ENCODE measurements at regions of chr4 and their contacts with region 1.

Region 1: GRCh38 chr4:159446266-159446976 is 343.5 kb downstream of the RAPGEF2 start:
- DNase-seq: peak; percentile 46 to 48
- H3K4me3 ChIP-seq: no peak overlapping the region
- H3K4me3 Mint-ChIP-seq: no peak overlapping the region
- H3K27ac Mint-ChIP-seq: no peak overlapping the region
- H3K4me1 ChIP-seq: no peaks in the 10 kb centered on the region
- H3K4me1 Mint-ChIP-seq: no peaks in the 10 kb centered on the region
- H3K27me3 ChIP-seq: no peaks in the 10 kb centered on the region
- H3K27me3 Mint-ChIP-seq: no peaks in the 10 kb centered on the region
- CTCF ChIP-seq: peak; percentile 72 to 87

Region 2: DNA sequence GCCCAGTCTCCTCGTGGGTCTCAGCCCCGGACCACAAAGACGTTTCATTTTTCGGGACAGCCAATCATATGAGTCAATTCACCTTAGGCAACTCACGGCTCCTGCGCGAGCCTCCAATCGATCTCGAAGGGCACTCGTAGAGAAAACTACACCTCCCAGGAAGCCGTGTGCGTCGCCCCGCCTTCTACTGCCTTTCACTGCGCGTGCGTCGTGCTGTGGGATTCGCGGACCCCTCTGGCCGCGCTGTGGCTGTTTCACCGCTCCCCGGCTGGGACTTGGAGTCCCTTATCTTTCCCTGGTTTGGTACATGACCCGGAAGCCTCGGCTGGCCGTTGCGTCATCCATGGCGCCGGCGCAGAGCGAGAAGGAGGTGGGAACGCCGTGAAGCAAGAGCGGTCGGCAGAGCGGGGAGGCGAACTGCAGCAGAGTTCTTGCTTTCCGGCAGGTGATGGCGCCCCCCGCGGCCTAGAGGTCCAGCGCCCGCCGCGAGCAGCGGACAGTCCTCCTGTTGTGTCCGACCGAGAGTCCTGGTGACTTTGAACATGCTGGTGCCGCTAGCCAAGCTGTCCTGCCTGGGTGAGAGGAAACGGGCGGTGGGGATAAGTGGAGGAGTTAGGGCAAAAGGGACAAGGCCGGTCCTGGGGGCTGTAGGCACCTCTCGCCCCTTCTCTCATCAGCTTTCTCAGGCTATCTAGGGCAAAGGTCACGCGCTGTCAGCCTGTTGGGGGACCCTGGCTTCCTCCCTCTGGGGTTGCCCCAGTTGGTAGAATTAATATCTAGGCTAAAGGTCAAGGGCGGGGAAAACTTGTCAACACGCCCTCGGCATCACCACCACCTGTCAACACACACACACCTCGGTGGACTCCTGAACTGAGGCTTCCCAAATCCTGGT is 774.3 kb before region 1 on chr4 and contains the start of gene ETFDH:
- CTCF ChIA-PET with region 1: no interaction called
- POLR2A ChIA-PET with region 1: no interaction called
- intact Hi-C with region 1: loop called (anchors 5 kb)
- DNase-seq: peak; percentile 98 to 99
- H3K4me3 ChIP-seq: peak within 1 kb of the TSS; percentile 80
- H3K4me3 Mint-ChIP-seq: peak within 1 kb of the TSS; percentile 100
- H3K27ac Mint-ChIP-seq: peak within 1 kb of the TSS; percentile 98
- H3K4me1 ChIP-seq: peaks cover 3% of the 10 kb centered on the region; the same call in 1 of the 2 replicates
- H3K4me1 Mint-ChIP-seq: peaks cover 7% of the 10 kb centered on the region
- H3K27me3 ChIP-seq: no peaks in the 10 kb centered on the region
- H3K27me3 Mint-ChIP-seq: no peaks in the 10 kb centered on the region
- CTCF ChIP-seq: peak; percentile 41 to 70
- total RNA-seq, gene ETFDH: 5.8 and 6.4 TPM in 2 replicates

Region 3: GRCh38 chr4:158856852-158857251 is 589.6 kb before region 1 on chr4:
- CTCF ChIA-PET with region 1: no interaction called
- POLR2A ChIA-PET with region 1: no interaction called
- intact Hi-C with region 1: loop called (anchors 1 kb)
- DNase-seq: peak in 1 of 2 experiments; percentile 28
- H3K4me3 ChIP-seq: no peak overlapping the region
- H3K4me3 Mint-ChIP-seq: no peak overlapping the region
- H3K27ac Mint-ChIP-seq: no peak overlapping the region
- H3K4me1 ChIP-seq: peaks cover 39% of the 10 kb centered on the region
- H3K4me1 Mint-ChIP-seq: peaks cover 30% of the 10 kb centered on the region
- H3K27me3 ChIP-seq: no peaks in the 10 kb centered on the region
- H3K27me3 Mint-ChIP-seq: no peaks in the 10 kb centered on the region
- CTCF ChIP-seq: peak; percentile 32 to 39

Region 4: GRCh38 chr4:159227984-159228383 is 218.4 kb before region 1 on chr4:
- CTCF ChIA-PET with region 1: no interaction called
- POLR2A ChIA-PET with region 1: no interaction called
- intact Hi-C with region 1: loop called (anchors 5 kb)
- DNase-seq: peak; percentile 76 to 86
- H3K4me3 ChIP-seq: peak overlapping the region; percentile 8; the same call in 1 of the 2 replicates
- H3K4me3 Mint-ChIP-seq: peak overlapping the region; percentile 82
- H3K27ac Mint-ChIP-seq: peak overlapping the region; percentile 97
- H3K4me1 ChIP-seq: peaks cover 48% of the 10 kb centered on the region
- H3K4me1 Mint-ChIP-seq: peaks cover 28% of the 10 kb centered on the region
- H3K27me3 ChIP-seq: no peaks in the 10 kb centered on the region
- H3K27me3 Mint-ChIP-seq: no peaks in the 10 kb centered on the region
- CTCF ChIP-seq: no peak

Region 5: DNA sequence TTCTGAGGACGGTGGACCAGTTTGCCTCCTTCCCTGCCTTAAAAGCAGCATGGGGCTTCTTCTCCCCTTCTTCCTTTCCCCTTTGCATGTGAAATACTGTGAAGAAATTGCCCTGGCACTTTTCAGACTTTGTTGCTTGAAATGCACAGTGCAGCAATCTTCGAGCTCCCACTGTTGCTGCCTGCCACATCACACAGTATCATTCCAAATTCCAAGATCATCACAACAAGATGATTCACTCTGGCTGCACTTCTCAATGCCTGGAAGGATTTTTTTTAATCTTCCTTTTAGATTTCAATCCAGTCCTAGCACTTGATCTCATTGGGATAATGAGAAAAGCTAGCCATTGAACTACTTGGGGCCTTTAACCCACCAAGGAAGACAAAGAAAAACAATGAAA is 88.2 kb before region 1 on chr4:
- CTCF ChIA-PET with region 1: no interaction called
- POLR2A ChIA-PET with region 1: no interaction called
- intact Hi-C with region 1: loop called (anchors 2 kb)
- DNase-seq: no peak
- H3K4me3 ChIP-seq: no peak overlapping the region
- H3K4me3 Mint-ChIP-seq: no peak overlapping the region
- H3K27ac Mint-ChIP-seq: no peak overlapping the region
- H3K4me1 ChIP-seq: no peaks in the 10 kb centered on the region
- H3K4me1 Mint-ChIP-seq: no peaks in the 10 kb centered on the region
- H3K27me3 ChIP-seq: no peaks in the 10 kb centered on the region
- H3K27me3 Mint-ChIP-seq: no peaks in the 10 kb centered on the region
- CTCF ChIP-seq: no peak

Measured in Caco-2 (cell line).